ENCODE measurements at regions of chr17 and their contacts with region 1.

Region 1: DNA sequence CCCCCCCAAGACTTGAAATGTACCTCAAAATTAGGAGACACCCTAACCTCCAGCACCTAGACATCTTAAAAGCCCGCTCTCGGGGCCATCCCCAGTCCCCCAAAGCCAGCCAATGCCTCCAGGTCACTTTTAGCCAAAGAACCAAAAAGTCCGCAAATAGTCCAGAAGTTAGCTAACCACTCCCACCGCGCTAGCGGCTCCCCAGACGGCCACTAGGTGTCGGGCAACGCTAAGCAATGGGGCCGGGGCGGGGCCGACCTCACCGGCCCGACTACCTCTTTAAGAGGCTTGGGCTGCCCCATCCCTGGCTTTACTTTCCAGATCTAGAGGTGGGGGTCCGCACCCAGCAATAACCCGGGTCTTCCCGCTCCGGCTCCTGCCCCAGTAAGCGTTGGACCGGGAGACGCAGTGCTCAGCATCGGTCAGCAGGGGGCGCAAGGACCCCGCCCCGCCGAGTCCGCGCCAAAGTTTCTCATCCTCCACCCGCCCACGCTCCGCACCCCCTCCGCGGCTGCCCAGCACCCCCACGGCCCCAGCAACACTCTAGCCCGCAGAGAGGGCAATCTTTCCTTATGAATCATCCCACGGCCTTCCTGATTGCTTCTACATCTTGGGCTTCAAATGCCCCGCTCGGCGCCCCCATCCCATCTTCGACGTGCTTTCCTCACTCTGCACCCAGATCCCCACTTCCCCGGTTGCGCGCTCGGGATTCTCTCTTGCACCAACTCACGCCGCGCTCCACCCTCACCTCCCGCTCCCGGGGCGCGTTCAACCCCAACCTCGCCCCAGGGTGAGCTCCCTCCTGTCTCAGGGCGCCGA is 765 bp downstream of the COL1A1 start:
- DNase-seq: peak; percentile 93
- ATAC-seq: peak; percentile 74
- H3K4me3 ChIP-seq: peak overlapping the region; percentile 69
- H3K27ac ChIP-seq: peak overlapping the region; percentile 92
- H3K4me1 ChIP-seq: peaks cover 18% of the 10 kb centered on the region
- H3K27me3 ChIP-seq: 0 out of 2 replicates have a peak, but pooled peaks cover 6% of the 10 kb centered on the region
- CTCF ChIP-seq: peak; percentile 100

Region 2: DNA sequence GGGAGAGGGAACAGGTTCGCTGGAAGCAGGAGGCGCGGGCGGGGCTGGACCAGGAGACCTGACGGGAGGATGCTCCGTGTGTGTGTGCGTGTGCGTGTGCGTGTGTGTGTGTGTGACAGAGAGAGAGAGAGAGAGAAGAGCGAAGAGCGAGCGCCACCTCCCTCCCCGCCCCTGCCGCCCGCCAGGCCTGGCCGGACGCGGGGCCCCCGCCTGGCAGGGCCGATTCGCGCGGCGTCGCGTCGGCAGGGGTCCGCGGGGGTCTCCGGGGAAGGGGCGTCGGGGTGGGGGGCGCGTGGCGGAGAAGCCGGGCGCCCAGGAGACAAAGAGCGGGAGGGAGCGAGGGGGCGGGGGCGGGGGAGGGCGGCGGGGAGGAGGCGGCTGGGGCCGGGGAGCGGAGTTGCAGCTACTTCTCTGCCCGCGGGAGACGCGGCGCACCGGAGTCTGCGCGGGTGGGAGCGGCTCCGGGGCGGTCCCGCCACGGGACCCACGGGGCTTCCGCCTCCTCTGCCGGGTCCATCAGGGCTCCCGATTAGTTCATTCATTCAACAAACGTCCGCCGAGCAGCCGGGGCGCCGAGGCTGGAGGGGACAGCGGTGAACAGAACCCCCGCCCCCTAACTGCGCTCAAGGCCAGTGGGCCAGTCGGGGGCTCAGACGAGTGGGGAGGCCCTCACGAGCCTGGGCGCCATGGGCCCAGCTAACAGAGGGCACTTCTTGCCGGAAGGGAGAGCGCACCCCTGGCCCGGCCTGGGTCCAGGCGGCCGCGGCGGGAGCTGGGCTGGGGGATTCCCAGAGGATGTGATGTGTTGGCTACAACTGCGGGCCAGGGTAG is 70.7 kb before region 1 on chr17 and contains the start of gene SAMD14:
- CTCF ChIA-PET with region 1: no interaction called
- POLR2A ChIA-PET with region 1: interaction called, 13 read pairs
- intact Hi-C with region 1: no loop called
- DNase-seq: no peak
- ATAC-seq: peak; percentile 51
- H3K4me3 ChIP-seq: peak within 1 kb of the TSS; percentile 71
- H3K27ac ChIP-seq: no peak within 1 kb of the TSS
- H3K4me1 ChIP-seq: peaks cover 3% of the 10 kb centered on the region; the same call in 1 of the 2 replicates
- H3K27me3 ChIP-seq: peaks cover 17% of the 10 kb centered on the region
- CTCF ChIP-seq: no peak
- total RNA-seq, gene SAMD14: 0.11 and 0.17 TPM in 2 replicates

Region 3: DNA sequence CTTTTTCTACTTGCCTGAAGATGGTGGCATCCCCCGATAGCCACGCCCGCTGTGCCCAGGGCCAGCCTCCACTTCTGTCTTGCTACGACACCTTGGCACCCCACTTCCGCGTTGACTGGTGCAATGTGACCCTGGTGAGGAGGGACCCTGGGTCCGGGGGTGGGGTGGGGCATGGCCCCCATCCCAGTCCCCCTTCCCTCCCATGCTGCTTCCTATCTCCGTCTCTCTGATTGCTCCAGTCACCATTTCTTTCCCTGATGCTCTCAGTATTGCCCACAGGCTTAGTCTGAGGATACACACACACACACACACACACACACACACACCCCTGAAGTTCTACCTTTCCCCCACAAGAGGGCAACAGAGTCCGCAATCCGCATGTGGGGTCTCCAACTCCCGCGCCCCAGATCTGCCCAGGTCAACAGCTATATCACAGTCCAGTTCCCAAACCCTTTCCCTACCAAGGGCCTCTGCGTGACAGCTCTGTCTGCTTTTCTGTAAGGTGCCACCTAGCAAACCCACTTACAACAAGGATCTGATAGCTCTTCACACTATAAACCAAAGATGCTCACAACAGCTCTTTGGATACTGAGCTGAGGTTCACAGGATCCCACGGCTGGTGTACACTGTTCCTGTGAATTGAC is 31.4 kb before region 1 on chr17:
- CTCF ChIA-PET with region 1: interaction called, 19 read pairs
- POLR2A ChIA-PET with region 1: no interaction called
- intact Hi-C with region 1: loop called (anchors 1 kb)
- DNase-seq: peak; percentile 80
- ATAC-seq: peak; percentile 51
- H3K4me3 ChIP-seq: peak overlapping the region; percentile 21; the same call in 1 of the 2 replicates
- H3K27ac ChIP-seq: peak overlapping the region; percentile 51
- H3K4me1 ChIP-seq: peaks cover 29% of the 10 kb centered on the region
- H3K27me3 ChIP-seq: no peaks in the 10 kb centered on the region
- CTCF ChIP-seq: peak; percentile 97

Region 4: GRCh38 chr17:50269477-50270434 is 69.1 kb after region 1 on chr17:
- CTCF ChIA-PET with region 1: interaction called, 28 read pairs
- POLR2A ChIA-PET with region 1: interaction called, 4 read pairs
- intact Hi-C with region 1: loop called (anchors 1 kb)
- DNase-seq: peak; percentile 88
- ATAC-seq: peak; percentile 39
- H3K4me3 ChIP-seq: no peak overlapping the region
- H3K27ac ChIP-seq: no peak overlapping the region
- H3K4me1 ChIP-seq: peaks cover 34% of the 10 kb centered on the region
- H3K27me3 ChIP-seq: no peaks in the 10 kb centered on the region
- CTCF ChIP-seq: peak; percentile 96

Region 5: GRCh38 chr17:50297407-50297865 is 96.8 kb after region 1 on chr17:
- CTCF ChIA-PET with region 1: interaction called, 53 read pairs
- POLR2A ChIA-PET with region 1: no interaction called
- intact Hi-C with region 1: loop called (anchors 1 kb)
- DNase-seq: peak; percentile 82
- ATAC-seq: peak; percentile 99
- H3K4me3 ChIP-seq: no peak overlapping the region
- H3K27ac ChIP-seq: no peak overlapping the region
- H3K4me1 ChIP-seq: no peaks in the 10 kb centered on the region
- H3K27me3 ChIP-seq: no peaks in the 10 kb centered on the region
- CTCF ChIP-seq: peak; percentile 96

Region 6: DNA sequence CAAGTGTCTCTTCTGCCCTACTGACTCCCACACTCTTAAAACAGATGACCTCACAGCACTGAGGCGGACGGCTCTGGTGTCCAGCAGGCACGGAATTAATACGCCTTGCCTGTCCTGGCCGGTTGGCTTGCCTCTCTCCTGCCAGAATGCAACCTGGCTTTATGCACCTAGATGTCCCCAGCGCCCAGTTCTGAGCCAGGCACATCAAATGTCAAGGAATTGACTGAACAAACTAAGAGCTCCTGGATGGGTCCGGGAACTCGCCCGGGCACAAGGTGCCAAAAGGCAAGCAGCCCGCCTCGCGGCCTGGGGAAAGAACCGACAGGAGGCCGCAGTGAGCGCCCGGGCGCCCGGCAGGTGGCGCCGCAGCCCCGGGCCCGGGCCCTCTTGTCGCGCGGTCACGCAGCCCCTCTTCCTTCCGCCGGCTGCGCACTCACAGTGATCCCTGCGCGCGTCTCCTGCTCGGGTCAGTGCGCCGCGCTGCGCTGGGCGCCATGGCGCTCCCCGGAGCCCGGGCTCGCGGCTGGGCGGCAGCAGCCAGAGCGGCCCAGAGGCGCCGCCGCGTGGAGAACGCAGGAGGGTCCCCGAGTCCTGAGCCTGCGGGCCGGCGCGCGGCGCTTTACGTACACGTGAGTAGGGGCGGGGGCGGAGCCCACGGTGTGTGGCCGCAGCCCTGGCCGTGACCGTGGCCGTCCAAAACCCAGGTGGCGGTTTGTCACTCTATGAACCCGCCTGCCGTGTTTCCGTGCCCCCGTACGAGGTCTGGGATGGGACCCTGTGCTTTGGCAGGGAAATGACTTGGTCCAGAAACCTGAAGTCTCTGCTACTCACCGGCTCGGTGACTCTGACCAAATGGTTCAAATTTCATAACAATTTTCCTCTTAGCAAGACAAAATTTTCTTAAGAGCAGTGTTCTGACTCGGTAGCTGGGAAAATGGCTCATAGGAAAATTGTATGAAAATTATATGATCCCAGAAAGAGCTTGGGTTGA is 278.0 kb after region 1 on chr17 and contains the start of gene RSAD1:
- CTCF ChIA-PET with region 1: interaction called, 3 read pairs
- POLR2A ChIA-PET with region 1: no interaction called
- intact Hi-C with region 1: loop called (anchors 1 kb)
- DNase-seq: peak; percentile 96
- ATAC-seq: peak; percentile 85
- H3K4me3 ChIP-seq: peak within 1 kb of the TSS; percentile 76
- H3K27ac ChIP-seq: peak within 1 kb of the TSS; percentile 38
- H3K4me1 ChIP-seq: peaks cover 24% of the 10 kb centered on the region
- H3K27me3 ChIP-seq: no peaks in the 10 kb centered on the region
- CTCF ChIP-seq: peak; percentile 90
- total RNA-seq, gene RSAD1: 37.7 and 46.7 TPM in 2 replicates

Measured in PC-3 (cell line).